PC-9 (cell line): ENCODE measurements at regions of chr7 and their contacts with region 1.

Region 1: DNA sequence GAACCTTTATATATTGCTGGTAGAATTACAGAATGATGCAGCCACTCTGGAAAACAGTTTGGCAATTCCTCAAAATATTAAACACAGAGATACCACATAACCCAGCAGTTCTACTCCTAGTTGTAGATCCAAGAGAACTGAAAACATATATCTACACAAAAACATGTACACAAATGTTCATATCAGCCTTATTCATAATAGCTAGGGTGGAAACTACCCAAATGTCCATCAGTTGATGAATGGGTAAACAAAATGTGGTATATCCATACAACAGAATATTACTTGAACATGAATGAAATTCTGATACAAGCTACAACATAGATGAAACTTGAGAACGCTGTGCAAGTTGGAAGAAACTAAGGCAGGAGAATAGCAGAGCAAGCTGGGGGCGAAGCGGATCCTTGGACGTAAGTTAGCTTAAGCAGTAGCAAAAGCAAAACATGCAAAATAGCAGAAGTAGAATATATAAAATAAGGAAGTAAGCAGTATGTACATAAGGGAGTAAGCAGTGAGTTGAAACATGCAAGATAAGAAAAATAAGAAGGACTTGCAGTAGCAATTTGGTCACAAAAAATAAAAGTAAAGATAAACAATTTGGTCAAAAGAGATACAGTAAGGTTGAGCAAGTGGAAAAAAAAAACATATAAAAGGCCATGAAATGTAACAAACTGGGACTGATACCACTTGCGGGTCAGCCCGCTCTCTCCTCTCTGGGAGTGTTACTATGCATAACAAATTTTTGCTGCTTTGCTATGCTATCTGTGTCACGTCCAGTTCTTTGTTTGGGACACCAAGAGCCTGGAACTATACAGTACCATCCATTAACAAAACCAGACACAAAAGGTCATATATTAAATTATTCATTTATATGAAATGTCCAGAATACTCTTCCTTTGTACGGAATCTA is 18.0 kb upstream of the HILPDA start:
- DNase-seq: no peak
- H3K4me3 ChIP-seq: no peak overlapping the region
- H3K27ac ChIP-seq: no peak overlapping the region
- H3K4me1 ChIP-seq: peaks cover 39% of the 10 kb centered on the region
- H3K27me3 ChIP-seq: no peaks in the 10 kb centered on the region
- CTCF ChIP-seq: no peak

Region 2: DNA sequence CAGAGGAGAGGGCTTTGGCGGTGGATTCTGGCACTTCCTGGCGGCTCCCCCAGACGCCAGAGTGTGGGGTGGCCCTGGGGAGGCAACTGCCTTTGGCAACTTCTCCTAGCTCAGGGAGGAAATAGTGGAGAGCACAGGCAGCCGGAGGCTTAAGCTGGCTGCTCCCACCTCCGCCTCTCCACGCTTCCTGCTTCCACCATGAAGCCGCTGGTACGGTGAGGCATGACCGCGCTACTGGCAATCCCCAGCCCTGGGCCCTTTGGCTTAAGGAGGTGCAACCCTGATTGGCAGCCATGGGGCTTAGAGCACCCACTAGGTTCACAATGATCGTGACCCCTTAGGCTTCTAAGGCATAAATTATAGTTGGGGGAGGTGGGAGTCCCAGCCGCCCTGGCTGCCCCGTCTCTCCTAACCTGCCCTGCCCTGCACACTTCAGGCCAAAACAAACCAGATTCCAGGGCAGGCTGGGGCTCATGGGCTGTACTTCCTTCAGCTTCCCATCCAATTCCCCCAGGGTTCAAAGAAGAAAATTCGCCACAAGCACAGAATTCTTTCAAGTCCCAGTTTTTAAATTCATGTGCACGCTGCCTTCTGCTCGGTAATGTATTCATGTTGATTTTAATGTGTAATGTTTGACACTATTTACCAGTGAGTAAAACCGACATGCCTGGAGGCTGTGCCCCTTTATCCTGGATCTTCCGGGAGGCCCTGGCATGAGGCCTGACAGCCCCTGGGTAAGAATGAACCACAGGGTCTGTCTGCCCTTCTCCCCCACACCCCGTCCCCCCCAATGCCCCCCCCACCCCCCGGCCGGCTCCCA is 315.8 kb before region 1 on chr7:
- CTCF ChIA-PET with region 1: no interaction called
- POLR2A ChIA-PET with region 1: no interaction called
- intact Hi-C with region 1: no loop called
- DNase-seq: no peak
- H3K4me3 ChIP-seq: no peak overlapping the region
- H3K27ac ChIP-seq: no peak overlapping the region
- H3K4me1 ChIP-seq: no peaks in the 10 kb centered on the region
- H3K27me3 ChIP-seq: no peaks in the 10 kb centered on the region
- CTCF ChIP-seq: no peak

Region 3: GRCh38 chr7:128409596-128410160 is 28.0 kb before region 1 on chr7 and contains the start of gene IMPDH1:
- CTCF ChIA-PET with region 1: interaction called, 7 read pairs
- POLR2A ChIA-PET with region 1: interaction called, 17 read pairs
- intact Hi-C with region 1: no loop called
- DNase-seq: peak; percentile 52 to 95
- H3K4me3 ChIP-seq: peak within 1 kb of the TSS; percentile 67
- H3K27ac ChIP-seq: peak within 1 kb of the TSS; percentile 66
- H3K4me1 ChIP-seq: peaks cover 25% of the 10 kb centered on the region
- H3K27me3 ChIP-seq: no peaks in the 10 kb centered on the region
- CTCF ChIP-seq: no peak
- total RNA-seq, gene IMPDH1: 119 and 123 TPM in 2 replicates

Region 4: DNA sequence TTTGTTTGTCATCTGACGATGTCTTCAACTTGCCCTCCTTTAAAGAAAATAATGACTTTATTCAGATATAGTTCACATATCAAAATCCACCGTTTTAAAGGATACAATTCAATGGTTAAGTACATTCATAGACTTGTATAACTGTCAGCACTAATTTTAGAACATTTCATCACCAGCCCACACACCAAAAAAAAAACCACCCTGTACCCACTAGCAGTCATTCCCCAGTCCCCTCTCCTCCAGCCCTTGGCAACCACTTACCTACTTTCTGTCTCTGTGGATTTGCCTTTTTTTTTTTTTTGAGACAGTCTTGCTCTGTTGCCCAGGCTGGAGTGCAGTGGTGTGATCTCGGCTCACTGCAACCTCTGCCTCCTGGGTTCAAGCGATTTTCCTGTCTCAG is 12.7 kb after region 1 on chr7:
- CTCF ChIA-PET with region 1: interaction called, 3 read pairs
- POLR2A ChIA-PET with region 1: interaction called, 14 read pairs
- intact Hi-C with region 1: no loop called
- DNase-seq: no peak
- H3K4me3 ChIP-seq: no peak overlapping the region
- H3K27ac ChIP-seq: no peak overlapping the region
- H3K4me1 ChIP-seq: peaks cover 17% of the 10 kb centered on the region; the same call in 1 of the 2 replicates
- H3K27me3 ChIP-seq: no peaks in the 10 kb centered on the region
- CTCF ChIP-seq: no peak

Region 5: GRCh38 chr7:128681794-128682537 is 244.3 kb after region 1 on chr7:
- CTCF ChIA-PET with region 1: no interaction called
- POLR2A ChIA-PET with region 1: interaction called, 11 read pairs
- intact Hi-C with region 1: no loop called
- DNase-seq: no peak
- H3K4me3 ChIP-seq: no peak overlapping the region
- H3K27ac ChIP-seq: no peak overlapping the region
- H3K4me1 ChIP-seq: no peaks in the 10 kb centered on the region
- H3K27me3 ChIP-seq: no peaks in the 10 kb centered on the region
- CTCF ChIP-seq: no peak